WTC11 (cell line): ENCODE measurements at regions of chr11 and their contacts with region 1.

Region 1: DNA sequence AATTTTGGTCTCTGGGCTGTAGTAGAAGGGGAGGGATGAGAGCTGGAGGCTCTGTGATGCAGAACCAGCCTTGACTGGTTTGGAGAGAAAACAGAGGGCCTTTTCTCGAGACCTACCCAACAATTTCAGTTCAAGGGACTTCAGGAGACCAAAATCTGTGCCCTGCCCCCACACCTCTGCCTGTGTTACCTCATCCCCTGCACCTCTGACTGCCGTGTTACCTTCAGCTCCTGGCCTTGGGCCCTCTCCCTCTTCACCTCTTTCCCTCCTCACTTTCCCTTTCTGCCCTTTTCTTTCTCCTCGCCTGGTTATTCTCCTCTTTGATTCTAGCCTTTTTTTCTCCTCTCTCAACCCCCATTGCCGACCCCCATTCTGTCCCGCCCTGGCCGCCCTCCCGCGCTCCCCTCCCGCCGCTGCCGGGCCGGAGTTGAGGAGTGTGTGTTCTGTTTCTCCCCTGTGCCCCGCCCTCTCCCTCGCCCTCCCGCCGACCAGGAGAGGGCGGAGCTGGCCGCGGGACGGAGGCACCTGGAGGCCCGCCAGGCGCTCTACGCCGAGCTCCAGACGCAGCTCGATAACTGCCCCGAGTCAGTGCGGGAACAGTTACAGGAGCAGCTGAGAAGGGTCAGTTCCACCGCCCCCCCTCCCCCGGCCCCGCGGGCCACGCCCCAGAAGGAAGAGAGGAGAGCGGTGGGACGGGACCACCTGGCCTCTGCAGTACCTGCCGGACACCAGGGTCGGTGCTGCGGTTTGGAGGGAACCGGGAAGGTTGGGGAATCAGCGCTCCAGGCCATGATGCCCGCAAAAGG is 27.2 kb downstream of the PHLDB1 start:
- DNase-seq: peak; percentile 93
- ATAC-seq: peak; percentile 90
- H3K4me3 Mint-ChIP-seq: peak overlapping the region; percentile 73
- H3K27ac Mint-ChIP-seq: peak overlapping the region; percentile 93
- H3K4me1 Mint-ChIP-seq: peaks cover 29% of the 10 kb centered on the region
- H3K27me3 Mint-ChIP-seq: no peaks in the 10 kb centered on the region
- CTCF ChIP-seq: no peak

Region 2: DNA sequence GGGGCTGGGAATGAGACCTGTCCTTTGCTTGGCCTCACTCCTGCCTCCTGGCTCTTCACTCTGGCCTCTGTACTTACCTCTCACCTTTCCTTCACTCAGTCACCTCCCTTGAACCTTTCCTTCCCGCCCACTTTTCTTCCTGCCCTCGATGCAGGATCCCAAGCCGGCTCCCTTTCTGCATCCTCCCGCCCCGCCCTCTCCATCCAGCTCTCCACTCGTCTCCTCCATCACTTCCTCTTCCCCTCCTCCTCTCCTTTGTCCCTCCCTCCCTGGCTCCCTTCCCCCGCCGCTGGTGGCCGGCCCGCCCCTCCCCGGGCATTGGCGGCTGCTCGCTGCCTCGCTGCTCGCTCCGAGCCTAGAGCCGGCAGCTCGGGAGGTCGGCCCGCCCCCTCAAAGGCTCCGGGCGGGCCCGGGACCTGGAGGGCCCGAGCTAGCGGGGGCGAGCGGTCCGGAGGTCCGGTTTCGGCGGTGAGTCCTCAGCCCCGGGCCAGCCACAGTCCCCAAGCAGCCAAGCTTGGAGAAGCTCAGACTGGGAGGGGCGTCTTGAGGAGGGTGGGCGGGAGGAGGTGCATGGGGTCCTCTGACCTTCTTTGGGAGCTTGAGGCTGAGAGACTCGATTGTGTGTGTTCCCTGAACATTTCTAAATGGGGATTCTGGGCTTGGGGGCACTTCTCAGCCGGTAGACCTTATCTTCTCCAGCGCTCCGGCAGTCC is 13.4 kb before region 1 on chr11:
- CTCF ChIA-PET with region 1: interaction called, 60 read pairs
- POLR2A ChIA-PET with region 1: interaction called, 75 read pairs
- DNase-seq: peak; percentile 90
- ATAC-seq: peak; percentile 87
- H3K4me3 Mint-ChIP-seq: peak overlapping the region; percentile 85
- H3K27ac Mint-ChIP-seq: peak overlapping the region; percentile 86
- H3K4me1 Mint-ChIP-seq: peaks cover 60% of the 10 kb centered on the region
- H3K27me3 Mint-ChIP-seq: no peaks in the 10 kb centered on the region
- CTCF ChIP-seq: no peak